ENCODE measurements at regions of chr15 and their contacts with region 1.

Region 1: GRCh38 chr15:55279746-55280351 is 9.8 kb downstream of the RAB27A start:
- DNase-seq: peak in 5 of 9 donors; percentile 4 to 55 (median 20)
- ATAC-seq: peak; percentile 68
- H3K4me3 ChIP-seq: peak overlapping the region; percentile 21
- H3K4me3 Mint-ChIP-seq: peak overlapping the region; percentile 16 to 82 (median 61)
- H3K27ac ChIP-seq: peak overlapping the region; percentile 59
- H3K27ac Mint-ChIP-seq: peak overlapping the region; percentile 68 to 95 (median 87)
- H3K4me1 ChIP-seq: peaks cover 43 to 89% of the 10 kb centered on the region in 2 donors
- H3K4me1 Mint-ChIP-seq: peaks cover 38 to 99% (median 90%) of the 10 kb centered on the region in 7 donors
- H3K27me3 ChIP-seq: no peaks in the 10 kb centered on the region
- H3K27me3 Mint-ChIP-seq: no peaks in the 10 kb centered on the region

Region 2: GRCh38 chr15:55241891-55242290 is 38.0 kb before region 1 on chr15:
- CTCF ChIA-PET with region 1: no interaction called
- POLR2A ChIA-PET with region 1: no interaction called
- intact Hi-C with region 1: loop called in 1 of 2 experiments (anchors 5 kb)
- DNase-seq: no peak
- ATAC-seq: no peak
- H3K4me3 ChIP-seq: no peak overlapping the region
- H3K4me3 Mint-ChIP-seq: no peak overlapping the region
- H3K27ac ChIP-seq: no peak overlapping the region
- H3K27ac Mint-ChIP-seq: peak overlapping the region in 1 of 9 donors; percentile 21
- H3K4me1 ChIP-seq: peaks cover 7 to 27% of the 10 kb centered on the region in 2 donors
- H3K4me1 Mint-ChIP-seq: peaks cover 6 to 59% (median 23%) of the 10 kb centered on the region in 7 donors
- H3K27me3 ChIP-seq: no peaks in the 10 kb centered on the region
- H3K27me3 Mint-ChIP-seq: no peaks in the 10 kb centered on the region

Region 3: DNA sequence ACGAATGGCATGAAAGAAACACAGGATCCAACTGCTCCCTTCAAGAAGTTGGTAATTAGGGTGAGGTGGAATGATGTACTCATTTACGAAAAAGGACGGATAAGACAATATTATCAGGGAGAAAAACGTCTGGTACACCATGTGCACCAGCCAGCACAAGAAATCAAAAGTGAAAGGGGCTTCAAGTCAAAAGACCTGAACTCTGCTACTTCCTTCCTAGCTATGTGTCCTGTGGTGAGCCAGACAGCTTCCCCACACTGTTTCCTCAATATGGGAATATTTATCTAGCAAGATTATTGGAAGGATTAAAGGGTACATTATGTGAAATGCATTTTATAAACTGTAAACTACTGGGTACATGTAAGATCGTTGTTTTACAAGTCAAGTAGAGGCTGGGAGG is 24.1 kb before region 1 on chr15:
- CTCF ChIA-PET with region 1: no interaction called
- POLR2A ChIA-PET with region 1: interaction called, 5 read pairs
- intact Hi-C with region 1: loop called (anchors 1 to 2 kb)
- DNase-seq: peak in 2 of 9 donors; percentile 13 to 31
- ATAC-seq: peak; percentile 64
- H3K4me3 ChIP-seq: peak overlapping the region; percentile 56
- H3K4me3 Mint-ChIP-seq: peak overlapping the region; percentile 71 to 86 (median 84)
- H3K27ac ChIP-seq: peak overlapping the region; percentile 54
- H3K27ac Mint-ChIP-seq: peak overlapping the region; percentile 80 to 96 (median 89)
- H3K4me1 ChIP-seq: peaks cover 40 to 62% of the 10 kb centered on the region in 2 donors
- H3K4me1 Mint-ChIP-seq: peaks cover 45 to 67% (median 63%) of the 10 kb centered on the region in 7 donors
- H3K27me3 ChIP-seq: no peaks in the 10 kb centered on the region
- H3K27me3 Mint-ChIP-seq: no peaks in the 10 kb centered on the region

Region 4: DNA sequence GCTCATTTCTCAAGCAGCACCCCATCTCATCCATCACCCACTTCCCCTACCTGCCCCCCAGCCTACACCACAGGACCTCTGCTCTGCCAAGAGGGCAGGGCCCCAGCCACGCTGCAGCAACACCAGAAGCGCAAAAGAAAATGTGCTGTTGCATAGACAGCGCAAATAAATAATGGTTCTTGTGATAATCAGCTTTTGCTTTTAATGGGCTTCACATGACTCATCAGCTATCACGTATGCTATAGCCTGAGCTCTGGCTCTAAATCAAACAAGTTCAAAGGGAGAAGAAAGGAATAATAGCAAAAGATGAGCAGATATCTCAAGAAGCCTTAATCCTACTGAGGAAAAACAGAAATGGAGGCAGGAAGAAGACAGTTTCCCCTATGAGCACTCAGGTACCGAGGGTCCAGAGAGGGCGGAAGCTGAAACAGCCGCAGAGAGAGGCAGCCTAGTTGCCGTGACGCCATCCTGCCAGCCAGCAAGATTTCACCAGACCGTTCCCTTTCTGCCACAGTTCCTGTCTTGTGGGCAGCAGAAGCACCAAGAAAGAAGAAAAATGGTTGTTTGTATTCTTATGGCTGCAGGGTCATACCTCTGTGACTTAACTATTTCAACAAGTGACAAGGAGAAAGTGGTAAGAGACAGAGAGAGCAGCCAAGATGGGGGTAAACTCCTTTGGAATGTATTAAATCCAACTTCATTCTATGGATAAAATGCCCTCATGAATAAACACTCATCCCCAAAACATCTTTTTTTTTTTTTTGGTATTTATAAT is 12.3 kb before region 1 on chr15:
- CTCF ChIA-PET with region 1: interaction called, 3 read pairs
- POLR2A ChIA-PET with region 1: interaction called, 16 read pairs
- intact Hi-C with region 1: loop called (anchors 1 kb)
- DNase-seq: peak; percentile 42 to 75 (median 68)
- ATAC-seq: peak; percentile 96
- H3K4me3 ChIP-seq: peak overlapping the region; percentile 52
- H3K4me3 Mint-ChIP-seq: peak overlapping the region; percentile 71 to 85 (median 79)
- H3K27ac ChIP-seq: peak overlapping the region; percentile 70
- H3K27ac Mint-ChIP-seq: peak overlapping the region; percentile 85 to 97 (median 92)
- H3K4me1 ChIP-seq: peaks cover 19 to 71% of the 10 kb centered on the region in 2 donors
- H3K4me1 Mint-ChIP-seq: peaks cover 33 to 58% (median 45%) of the 10 kb centered on the region in 7 donors
- H3K27me3 ChIP-seq: no peaks in the 10 kb centered on the region
- H3K27me3 Mint-ChIP-seq: no peaks in the 10 kb centered on the region

Region 5: DNA sequence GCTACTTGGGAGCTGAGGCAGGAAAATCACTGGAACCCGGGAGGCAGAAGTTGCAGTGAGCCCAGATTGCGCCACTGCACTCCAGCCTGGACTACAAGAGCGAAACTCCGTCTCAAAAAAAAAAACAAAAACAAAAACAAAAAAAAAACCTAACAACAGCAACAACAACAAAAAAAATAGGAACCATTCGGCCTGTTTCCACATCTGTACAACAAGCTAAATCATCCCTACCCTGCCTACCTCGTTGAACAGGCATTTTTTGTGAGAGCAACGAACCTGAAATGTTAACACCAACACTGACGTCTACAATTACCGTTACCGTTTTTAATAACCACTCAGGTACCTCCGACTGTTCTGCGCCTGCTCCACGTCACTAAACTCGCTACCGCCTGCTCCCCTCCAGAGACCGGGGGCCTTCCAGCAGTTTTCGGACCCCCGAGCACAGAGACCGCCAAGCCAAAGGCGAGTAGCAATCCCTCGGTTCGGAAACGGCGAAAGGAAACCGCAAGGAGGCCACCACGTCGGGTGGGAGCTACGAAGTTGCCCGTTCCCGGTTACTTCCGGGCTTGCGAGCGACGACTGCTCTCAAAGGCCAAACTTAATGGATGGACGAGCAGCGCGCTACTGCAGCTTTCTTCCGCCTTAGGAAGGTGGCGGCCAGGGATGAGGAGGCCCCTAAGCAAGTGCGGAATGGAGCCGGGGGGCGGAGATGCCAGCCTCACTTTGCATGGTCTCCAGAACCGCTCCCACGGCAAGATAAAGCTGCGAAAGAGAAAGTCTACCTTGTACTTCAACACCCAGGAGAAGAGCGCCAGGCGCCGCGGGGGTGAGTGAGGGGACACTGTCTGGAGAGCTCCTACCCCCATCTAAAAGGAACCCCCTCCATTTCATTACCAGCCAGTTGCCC is 39.0 kb after region 1 on chr15 and contains the starts of genes PIGB and PIGBOS1:
- CTCF ChIA-PET with region 1: no interaction called
- POLR2A ChIA-PET with region 1: no interaction called
- intact Hi-C with region 1: loop called in 1 of 2 experiments (anchors 5 kb)
- DNase-seq: peak; percentile 73 to 88 (median 84)
- ATAC-seq: peak; percentile 91
- H3K4me3 ChIP-seq: peak within 1 kb of the TSS; percentile 95
- H3K4me3 Mint-ChIP-seq: peak within 1 kb of the TSS; percentile 98 to 99 (median 98)
- H3K27ac ChIP-seq: peak within 1 kb of the TSS; percentile 98
- H3K27ac Mint-ChIP-seq: peak within 1 kb of the TSS; percentile 99 to 100 (median 100)
- H3K4me1 ChIP-seq: peaks cover 5 to 28% of the 10 kb centered on the region in 2 donors
- H3K4me1 Mint-ChIP-seq: peaks cover 41 to 86% (median 76%) of the 10 kb centered on the region in 7 donors
- H3K27me3 ChIP-seq: no peaks in the 10 kb centered on the region
- H3K27me3 Mint-ChIP-seq: no peaks in the 10 kb centered on the region
- total RNA-seq, gene PIGB: 21.4 to 30.2 (median 24.3) TPM
- total RNA-seq, gene PIGBOS1: 8.8 to 21.3 (median 12.5) TPM